ENCODE measurements at regions of chr7 and their contacts with region 1.

Region 1: GRCh38 chr7:151226875-151227782 is at the start of gene ABCF2:
- DNase-seq: peak; percentile 99
- ATAC-seq: peak; percentile 100
- H3K4me3 Mint-ChIP-seq: peak within 1 kb of the TSS; percentile 92
- H3K27ac Mint-ChIP-seq: peak within 1 kb of the TSS; percentile 92
- H3K4me1 Mint-ChIP-seq: peaks cover 40% of the 10 kb centered on the region
- H3K27me3 Mint-ChIP-seq: no peaks in the 10 kb centered on the region
- total RNA-seq, gene ABCF2: 48.4 to 49.0 TPM

Region 2: DNA sequence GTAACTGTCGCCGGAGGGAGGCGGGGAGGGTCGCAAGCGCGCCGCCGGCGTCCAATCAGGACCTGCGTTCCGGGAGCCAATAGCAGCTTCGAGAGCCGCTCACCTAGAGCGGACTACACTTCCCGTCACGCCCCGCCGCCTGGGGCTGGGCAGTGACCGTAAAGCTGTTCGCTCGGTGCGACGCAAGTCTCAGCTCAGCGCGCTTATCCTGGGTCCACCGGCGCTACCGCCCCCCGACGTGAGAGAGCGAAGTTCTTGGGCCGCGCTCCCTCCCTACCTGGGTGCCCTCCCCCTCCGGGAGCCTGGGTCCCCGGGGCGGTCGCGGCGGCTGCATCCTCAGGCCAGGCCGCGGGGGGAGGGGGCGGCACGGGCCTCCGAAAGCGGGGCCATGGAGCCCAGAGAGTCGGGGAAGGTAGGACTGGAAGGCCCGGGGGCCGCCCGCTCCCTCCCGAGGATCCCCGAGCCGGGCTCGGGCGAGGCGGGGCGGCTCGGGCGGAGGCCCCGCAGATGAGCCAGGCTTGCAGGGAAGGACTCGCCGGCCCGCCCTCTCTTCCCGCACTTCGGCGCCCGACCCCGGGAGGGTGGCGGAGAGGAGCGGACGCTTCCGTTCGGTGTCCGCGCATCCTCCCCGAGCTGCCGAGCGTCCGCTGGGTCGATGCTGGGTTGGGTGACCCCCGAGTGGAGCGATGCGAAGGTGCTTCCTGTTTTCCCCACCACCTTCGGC is 1388.7 kb before region 1 on chr7 and contains the start of gene ZNF862:
- CTCF ChIA-PET with region 1: no interaction called
- POLR2A ChIA-PET with region 1: no interaction called
- intact Hi-C with region 1: loop called in 1 of 2 experiments (anchors 2 kb)
- DNase-seq: peak; percentile 98
- ATAC-seq: peak; percentile 98
- H3K4me3 Mint-ChIP-seq: peak within 1 kb of the TSS; percentile 78
- H3K27ac Mint-ChIP-seq: peak within 1 kb of the TSS; percentile 74
- H3K4me1 Mint-ChIP-seq: peaks cover 28% of the 10 kb centered on the region
- H3K27me3 Mint-ChIP-seq: no peaks in the 10 kb centered on the region
- total RNA-seq, gene ZNF862: 17.6 to 18.3 TPM

Region 3: DNA sequence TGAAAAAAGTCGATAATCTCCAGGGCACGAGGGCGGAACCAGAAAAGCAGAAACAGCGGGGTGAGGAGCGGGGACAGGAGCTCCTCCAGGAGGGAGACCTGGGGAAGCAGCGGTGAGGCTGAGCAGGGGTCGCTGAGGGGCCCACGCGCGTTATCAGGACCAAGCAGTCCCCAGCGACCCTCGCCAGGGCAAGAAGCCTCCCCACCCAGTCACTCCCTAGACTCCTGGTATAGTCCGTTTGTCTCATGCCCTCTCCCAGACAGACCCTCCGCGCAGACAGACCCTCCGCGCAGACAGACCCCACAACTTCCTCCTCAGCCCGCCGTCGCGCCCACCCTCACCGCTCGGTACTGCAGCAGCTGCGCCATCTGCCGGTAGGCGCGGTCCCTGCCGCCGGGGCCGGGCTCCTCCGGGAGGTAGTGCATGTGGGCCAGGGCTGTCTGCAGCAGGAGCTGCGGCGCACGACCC is 209.1 kb before region 1 on chr7:
- CTCF ChIA-PET with region 1: interaction called, 3 read pairs
- POLR2A ChIA-PET with region 1: no interaction called
- intact Hi-C with region 1: loop called in 1 of 2 experiments (anchors 5 kb)
- DNase-seq: peak; percentile 90
- ATAC-seq: peak; percentile 59
- H3K4me3 Mint-ChIP-seq: peak overlapping the region; percentile 66
- H3K27ac Mint-ChIP-seq: peak overlapping the region; percentile 80
- H3K4me1 Mint-ChIP-seq: peaks cover 47% of the 10 kb centered on the region
- H3K27me3 Mint-ChIP-seq: peaks cover 9% of the 10 kb centered on the region

Region 4: GRCh38 chr7:151080522-151081169 is 146.5 kb before region 1 on chr7 and contains the start of gene FASTK:
- CTCF ChIA-PET with region 1: no interaction called
- POLR2A ChIA-PET with region 1: interaction called, 7 read pairs
- intact Hi-C with region 1: loop called (anchors 1 to 5 kb)
- DNase-seq: peak; percentile 94
- ATAC-seq: peak; percentile 89
- H3K4me3 Mint-ChIP-seq: peak within 1 kb of the TSS; percentile 94
- H3K27ac Mint-ChIP-seq: peak within 1 kb of the TSS; percentile 91
- H3K4me1 Mint-ChIP-seq: peaks cover 43% of the 10 kb centered on the region
- H3K27me3 Mint-ChIP-seq: peaks cover 7% of the 10 kb centered on the region
- total RNA-seq, gene FASTK: 56.6 to 56.7 TPM

Region 5: GRCh38 chr7:151115836-151116433 is 111.2 kb before region 1 on chr7:
- CTCF ChIA-PET with region 1: no interaction called
- POLR2A ChIA-PET with region 1: no interaction called
- intact Hi-C with region 1: no loop called
- DNase-seq: peak; percentile 28
- ATAC-seq: no peak
- H3K4me3 Mint-ChIP-seq: peak overlapping the region; percentile 39
- H3K27ac Mint-ChIP-seq: no peak overlapping the region
- H3K4me1 Mint-ChIP-seq: peaks cover 5% of the 10 kb centered on the region
- H3K27me3 Mint-ChIP-seq: peaks cover 3% of the 10 kb centered on the region

Region 6: GRCh38 chr7:151244196-151244840 is 17.2 kb after region 1 on chr7:
- CTCF ChIA-PET with region 1: interaction called, 49 read pairs
- POLR2A ChIA-PET with region 1: interaction called, 6 read pairs
- intact Hi-C with region 1: loop called (anchors 1 to 2 kb)
- DNase-seq: peak; percentile 81
- ATAC-seq: peak; percentile 27
- H3K4me3 Mint-ChIP-seq: peak overlapping the region; percentile 58
- H3K27ac Mint-ChIP-seq: no peak overlapping the region
- H3K4me1 Mint-ChIP-seq: peaks cover 36% of the 10 kb centered on the region
- H3K27me3 Mint-ChIP-seq: peaks cover 23% of the 10 kb centered on the region

Region 7: DNA sequence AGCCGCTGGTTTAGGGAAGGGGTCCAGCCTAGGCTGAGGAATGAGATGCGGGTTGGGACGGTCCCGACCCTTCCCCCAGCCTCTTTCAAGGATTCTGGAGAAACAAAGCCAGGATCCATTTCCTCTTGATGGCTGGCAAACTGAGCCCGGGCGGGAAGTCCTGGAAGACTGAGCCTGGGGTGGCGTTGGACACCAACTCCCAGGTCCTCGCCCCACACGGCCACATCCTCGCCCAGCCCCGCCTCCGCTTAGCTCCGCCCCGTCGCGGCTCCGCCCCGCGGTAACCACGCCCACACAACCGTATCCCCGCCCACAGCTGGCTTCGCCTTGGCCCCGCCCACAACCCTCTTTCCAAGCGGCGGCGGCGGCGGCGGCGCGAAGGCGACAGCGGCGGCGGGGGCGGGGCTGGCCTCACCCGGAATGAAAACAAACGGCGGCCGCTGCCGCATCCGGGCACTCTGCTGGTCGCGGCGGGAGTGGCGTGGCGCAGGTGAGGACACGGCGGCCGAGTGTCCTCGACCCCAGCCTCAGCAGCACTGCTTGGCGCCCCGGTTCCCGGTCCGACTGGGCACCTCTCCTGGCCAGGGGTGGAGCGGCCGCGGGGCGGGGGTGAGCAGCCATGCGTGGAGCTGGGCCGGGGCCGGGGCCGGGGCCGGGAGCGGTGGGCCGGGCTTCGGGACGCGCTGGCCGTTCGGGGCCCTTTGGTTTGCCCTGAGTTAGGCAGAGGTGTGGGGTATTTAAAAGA is 114.4 kb after region 1 on chr7 and contains the start of gene NUB1:
- CTCF ChIA-PET with region 1: no interaction called
- POLR2A ChIA-PET with region 1: interaction called, 3 read pairs
- intact Hi-C with region 1: loop called in 1 of 2 experiments (anchors 1 kb)
- DNase-seq: peak; percentile 96
- ATAC-seq: peak; percentile 82
- H3K4me3 Mint-ChIP-seq: peak within 1 kb of the TSS; percentile 76
- H3K27ac Mint-ChIP-seq: peak within 1 kb of the TSS; percentile 78
- H3K4me1 Mint-ChIP-seq: peaks cover 46% of the 10 kb centered on the region
- H3K27me3 Mint-ChIP-seq: no peaks in the 10 kb centered on the region
- total RNA-seq, gene NUB1: 51.4 to 70.4 TPM

Measured in activated CD4-positive, alpha-beta T cell treated with anti-CD3 and anti-CD28 coated beads for 36 hours (primary cell).